ENCODE measurements at regions of chr1 and their contacts with region 1.

Region 1: DNA sequence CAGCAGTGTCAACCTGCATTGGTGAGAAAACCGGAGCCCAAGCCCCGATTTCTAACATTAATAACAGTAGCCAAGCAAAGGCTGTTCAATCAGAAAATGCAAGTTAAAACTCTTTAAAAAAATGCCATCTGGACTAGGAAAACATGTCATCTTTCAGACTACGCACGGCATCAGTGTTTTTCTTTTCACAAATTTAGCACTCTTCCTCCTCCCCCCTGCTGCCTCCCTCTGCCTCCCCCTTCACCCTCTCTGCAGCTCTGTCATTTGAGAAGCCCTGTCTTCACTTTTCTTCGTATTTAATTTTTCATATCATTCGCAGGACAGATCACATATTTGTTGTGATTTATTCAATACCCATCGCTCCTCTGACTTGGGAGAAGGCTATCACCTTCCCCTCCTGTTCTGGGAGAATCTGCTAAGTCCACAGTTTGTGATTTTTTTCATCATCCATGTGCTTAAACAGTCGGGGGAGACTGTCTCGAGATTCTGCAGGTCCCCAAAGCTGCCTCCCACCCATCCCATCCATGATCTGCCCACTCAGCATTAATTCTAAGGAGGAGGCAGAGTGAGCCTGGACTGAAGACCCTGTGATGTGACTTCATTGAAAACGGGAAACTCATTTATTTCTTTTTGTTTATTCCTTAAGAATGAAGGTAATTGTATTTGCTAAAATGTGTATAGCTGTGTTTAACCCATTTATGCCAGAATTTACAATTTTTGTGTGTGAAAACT is 84.8 kb downstream of the PROX1 start:
- DNase-seq: no peak
- ATAC-seq: no peak
- H3K4me3 ChIP-seq: no peak overlapping the region
- H3K4me3 Mint-ChIP-seq: no peak overlapping the region
- H3K27ac ChIP-seq: no peak overlapping the region
- H3K27ac Mint-ChIP-seq: no peak overlapping the region
- H3K4me1 ChIP-seq: no peaks in the 10 kb centered on the region
- H3K4me1 Mint-ChIP-seq: no peaks in the 10 kb centered on the region
- H3K27me3 ChIP-seq: no peaks in the 10 kb centered on the region
- H3K27me3 Mint-ChIP-seq: peaks cover 0 to 28% (median 14%) of the 10 kb centered on the region in 5 donors

Region 2: GRCh38 chr1:214037468-214037867 is 35.1 kb before region 1 on chr1:
- CTCF ChIA-PET with region 1: no interaction called
- POLR2A ChIA-PET with region 1: no interaction called
- intact Hi-C with region 1: loop called in 1 of 2 experiments (anchors 1 kb)
- DNase-seq: no peak
- ATAC-seq: no peak
- H3K4me3 ChIP-seq: no peak overlapping the region
- H3K4me3 Mint-ChIP-seq: no peak overlapping the region
- H3K27ac ChIP-seq: no peak overlapping the region
- H3K27ac Mint-ChIP-seq: no peak overlapping the region
- H3K4me1 ChIP-seq: no peaks in the 10 kb centered on the region
- H3K4me1 Mint-ChIP-seq: no peaks in the 10 kb centered on the region
- H3K27me3 ChIP-seq: no peaks in the 10 kb centered on the region
- H3K27me3 Mint-ChIP-seq: peaks cover 8 to 36% (median 16%) of the 10 kb centered on the region in 5 donors

Region 3: DNA sequence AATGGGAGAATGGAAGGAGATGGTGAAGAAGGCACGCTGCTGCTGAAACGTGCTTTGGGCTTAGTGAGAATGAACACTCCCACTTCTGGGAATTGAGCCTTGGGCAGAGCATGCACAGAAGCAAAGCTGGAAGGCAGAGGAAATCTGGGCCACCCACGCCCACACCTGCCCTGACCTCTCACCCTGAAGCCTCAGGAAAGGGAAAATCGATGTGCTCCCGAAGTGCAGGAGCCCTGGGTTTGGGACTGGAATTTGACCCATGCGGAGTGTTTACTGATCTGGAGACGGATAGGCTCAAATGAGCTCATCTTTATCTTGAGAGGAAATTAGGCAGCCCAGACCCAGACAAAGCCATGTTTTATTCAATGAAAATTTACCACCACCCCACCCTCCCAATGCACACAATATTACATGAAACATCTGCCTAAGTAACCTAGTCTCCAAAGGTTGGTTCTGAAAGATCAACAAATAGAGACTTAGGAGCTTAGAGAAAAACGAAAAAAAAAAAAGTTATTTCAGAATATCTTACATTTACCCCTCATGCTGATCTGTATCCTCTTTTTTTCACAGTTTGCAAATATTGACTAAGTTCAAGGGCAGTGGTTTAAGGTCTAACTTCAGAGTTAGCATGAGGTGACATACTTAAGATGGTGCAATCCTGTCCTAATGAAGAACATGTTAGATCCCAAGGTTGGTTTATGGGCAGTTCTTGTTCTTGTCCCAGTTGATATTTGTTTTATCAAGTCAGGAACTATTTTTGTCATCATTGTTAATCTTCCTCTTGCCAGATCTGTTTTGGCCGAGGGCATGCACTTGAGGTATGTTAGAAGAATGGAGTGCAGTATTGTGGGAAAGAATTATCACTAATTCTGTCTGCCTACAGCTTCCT is 21.8 kb before region 1 on chr1:
- CTCF ChIA-PET with region 1: no interaction called
- POLR2A ChIA-PET with region 1: no interaction called
- intact Hi-C with region 1: no loop called
- DNase-seq: no peak
- ATAC-seq: no peak
- H3K4me3 ChIP-seq: no peak overlapping the region
- H3K4me3 Mint-ChIP-seq: no peak overlapping the region
- H3K27ac ChIP-seq: no peak overlapping the region
- H3K27ac Mint-ChIP-seq: no peak overlapping the region
- H3K4me1 ChIP-seq: no peaks in the 10 kb centered on the region
- H3K4me1 Mint-ChIP-seq: no peaks in the 10 kb centered on the region
- H3K27me3 ChIP-seq: no peaks in the 10 kb centered on the region
- H3K27me3 Mint-ChIP-seq: peaks cover 0 to 7% (median 4%) of the 10 kb centered on the region in 5 donors

Region 4: GRCh38 chr1:214086945-214087344 is 14.4 kb after region 1 on chr1:
- CTCF ChIA-PET with region 1: no interaction called
- POLR2A ChIA-PET with region 1: no interaction called
- intact Hi-C with region 1: no loop called
- DNase-seq: no peak
- ATAC-seq: no peak
- H3K4me3 ChIP-seq: no peak overlapping the region
- H3K4me3 Mint-ChIP-seq: no peak overlapping the region
- H3K27ac ChIP-seq: no peak overlapping the region
- H3K27ac Mint-ChIP-seq: no peak overlapping the region
- H3K4me1 ChIP-seq: no peaks in the 10 kb centered on the region
- H3K4me1 Mint-ChIP-seq: peaks cover 0 to 5% (median 3%) of the 10 kb centered on the region in 7 donors
- H3K27me3 ChIP-seq: no peaks in the 10 kb centered on the region
- H3K27me3 Mint-ChIP-seq: peaks cover 0 to 13% (median 4%) of the 10 kb centered on the region in 5 donors